ENCODE measurements at regions of chr12 and their contacts with region 1.

Region 1: DNA sequence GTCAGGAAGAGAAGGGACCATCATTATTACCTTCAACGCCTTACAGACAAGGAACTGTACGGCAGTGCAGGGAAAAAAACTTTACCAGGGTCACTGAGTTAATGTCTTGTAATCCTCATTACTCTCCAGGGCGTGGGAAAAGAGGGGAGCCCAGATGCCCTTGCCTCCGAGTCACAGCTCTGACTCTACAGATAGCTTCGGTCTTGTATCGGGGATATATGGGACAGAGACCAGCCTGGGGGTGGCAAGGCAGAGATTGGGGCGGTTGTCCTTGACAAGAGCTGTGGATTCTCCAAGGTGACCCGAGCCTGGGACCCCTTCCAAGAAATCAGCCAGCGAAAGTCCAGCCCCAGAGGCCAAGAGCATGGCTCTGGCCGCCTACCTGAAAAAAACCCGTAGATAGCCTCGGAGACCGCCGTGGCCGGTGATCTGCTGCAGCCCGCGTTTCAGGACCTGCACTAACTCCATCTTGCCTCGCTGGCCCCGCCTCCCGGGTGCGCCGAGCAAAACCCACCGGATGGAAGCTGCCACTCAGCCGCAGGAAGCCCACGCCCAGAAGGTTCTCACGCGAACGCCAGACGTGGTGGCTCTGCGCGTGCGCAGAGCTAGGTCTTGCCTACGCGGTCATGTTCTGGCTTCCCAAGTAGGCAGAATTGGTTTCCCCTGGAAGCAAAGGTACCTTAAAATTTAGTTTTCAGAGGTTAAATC is at the start of gene NDUFA12:
- DNase-seq: peak; percentile 96
- ATAC-seq: peak; percentile 100
- H3K4me3 ChIP-seq: peak within 1 kb of the TSS; percentile 79
- H3K27ac ChIP-seq: peak within 1 kb of the TSS; percentile 77
- H3K4me1 ChIP-seq: no peaks in the 10 kb centered on the region
- H3K27me3 ChIP-seq: no peaks in the 10 kb centered on the region
- CTCF ChIP-seq: no peak
- POLR2A ChIP-seq: peak; percentile 81
- RAD21 ChIP-seq: no peak; the same call in 1 of the 2 replicates
- total RNA-seq, gene NDUFA12: 116 and 166 TPM in 2 replicates

Region 2: GRCh38 chr12:94222351-94223084 is 780.8 kb before region 1 on chr12:
- CTCF ChIA-PET with region 1: interaction called, 12 read pairs
- POLR2A ChIA-PET with region 1: no interaction called
- dilution Hi-C with region 1: no loop called
- in situ Hi-C with region 1: no loop called
- intact Hi-C with region 1: no loop called
- DNase-seq: no peak
- ATAC-seq: no peak
- H3K4me3 ChIP-seq: no peak overlapping the region
- H3K27ac ChIP-seq: no peak overlapping the region
- H3K4me1 ChIP-seq: no peaks in the 10 kb centered on the region
- H3K27me3 ChIP-seq: peaks cover 55% of the 10 kb centered on the region
- CTCF ChIP-seq: no peak
- POLR2A ChIP-seq: no peak
- RAD21 ChIP-seq: no peak

Region 3: GRCh38 chr12:95022477-95022876 is 19.1 kb after region 1 on chr12:
- CTCF ChIA-PET with region 1: no interaction called
- POLR2A ChIA-PET with region 1: interaction called, 20 read pairs
- dilution Hi-C with region 1: no loop called
- in situ Hi-C with region 1: no loop called
- intact Hi-C with region 1: no loop called
- DNase-seq: no peak
- ATAC-seq: no peak
- H3K4me3 ChIP-seq: no peak overlapping the region
- H3K27ac ChIP-seq: no peak overlapping the region
- H3K4me1 ChIP-seq: no peaks in the 10 kb centered on the region
- H3K27me3 ChIP-seq: no peaks in the 10 kb centered on the region
- CTCF ChIP-seq: no peak
- POLR2A ChIP-seq: no peak
- RAD21 ChIP-seq: no peak

Region 4: DNA sequence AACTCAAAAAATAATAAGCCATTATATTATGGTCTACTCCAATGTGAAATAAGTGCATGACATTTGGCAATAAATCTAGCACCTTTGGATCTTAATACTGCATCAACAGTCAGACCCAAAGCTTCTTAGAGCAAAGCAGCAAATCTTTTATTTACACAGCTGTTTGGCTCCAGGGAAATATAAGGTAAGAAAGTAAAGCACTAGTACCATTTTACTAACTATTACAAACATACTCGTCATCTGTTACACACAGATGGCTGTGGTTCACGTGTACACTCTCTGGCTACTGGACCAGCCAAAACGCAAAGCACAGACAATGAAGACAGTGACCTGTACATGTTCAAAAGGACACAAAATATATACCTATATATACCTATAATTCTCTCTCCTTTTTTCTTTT is 211.1 kb after region 1 on chr12:
- CTCF ChIA-PET with region 1: no interaction called
- POLR2A ChIA-PET with region 1: no interaction called
- dilution Hi-C with region 1: no loop called
- in situ Hi-C with region 1: no loop called
- intact Hi-C with region 1: no loop called
- DNase-seq: no peak
- ATAC-seq: no peak
- H3K4me3 ChIP-seq: no peak overlapping the region
- H3K27ac ChIP-seq: no peak overlapping the region
- H3K4me1 ChIP-seq: no peaks in the 10 kb centered on the region
- H3K27me3 ChIP-seq: no peaks in the 10 kb centered on the region
- CTCF ChIP-seq: no peak
- POLR2A ChIP-seq: no peak
- RAD21 ChIP-seq: no peak

Measured in IMR-90 (cell line).